Breast epithelium (tissue), 4 donors: ENCODE measurements at regions of chr3 and their contacts with region 1.

Region 1: GRCh38 chr3:61360297-61360965 is 109.2 kb upstream of the FHIT start:
- DNase-seq: no peak
- H3K4me3 ChIP-seq: no peak overlapping the region
- H3K27ac ChIP-seq: no peak overlapping the region
- H3K4me1 ChIP-seq: no peaks in the 10 kb centered on the region
- H3K27me3 ChIP-seq: no peaks in the 10 kb centered on the region
- CTCF ChIP-seq: no peak
- POLR2A ChIP-seq: no peak

Region 2: DNA sequence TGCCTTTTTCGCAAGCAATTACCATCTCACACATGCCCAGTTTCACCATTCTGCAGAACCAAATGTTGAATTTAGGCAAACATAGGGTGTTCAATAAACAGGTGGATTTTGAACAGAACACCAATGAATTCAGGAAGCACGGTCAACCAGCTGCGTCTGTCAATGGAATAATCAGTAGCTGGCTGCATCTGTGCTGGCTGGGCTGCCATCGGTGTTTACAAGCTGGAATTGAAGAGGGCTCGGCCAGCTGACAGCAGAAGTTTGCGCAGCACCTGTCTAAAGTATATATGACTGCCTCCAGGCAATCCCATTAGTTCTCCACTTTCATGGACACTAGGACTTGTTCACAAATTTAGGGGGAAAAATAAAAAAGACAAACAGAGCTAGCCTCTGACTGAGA is 1314.2 kb before region 1 on chr3:
- intact Hi-C with region 1: loop called (anchors 5 kb)
- DNase-seq: no peak
- H3K4me3 ChIP-seq: no peak overlapping the region
- H3K27ac ChIP-seq: no peak overlapping the region
- H3K4me1 ChIP-seq: no peaks in the 10 kb centered on the region
- H3K27me3 ChIP-seq: no peaks in the 10 kb centered on the region
- CTCF ChIP-seq: no peak
- POLR2A ChIP-seq: no peak

Region 3: GRCh38 chr3:60809857-60810610 is 550.4 kb before region 1 on chr3:
- intact Hi-C with region 1: no loop called
- DNase-seq: no peak
- H3K4me3 ChIP-seq: no peak overlapping the region
- H3K27ac ChIP-seq: no peak overlapping the region
- H3K4me1 ChIP-seq: no peaks in the 10 kb centered on the region
- H3K27me3 ChIP-seq: no peaks in the 10 kb centered on the region
- CTCF ChIP-seq: no peak
- POLR2A ChIP-seq: no peak